ENCODE measurements at regions of chr16 and their contacts with region 1.

Region 1: DNA sequence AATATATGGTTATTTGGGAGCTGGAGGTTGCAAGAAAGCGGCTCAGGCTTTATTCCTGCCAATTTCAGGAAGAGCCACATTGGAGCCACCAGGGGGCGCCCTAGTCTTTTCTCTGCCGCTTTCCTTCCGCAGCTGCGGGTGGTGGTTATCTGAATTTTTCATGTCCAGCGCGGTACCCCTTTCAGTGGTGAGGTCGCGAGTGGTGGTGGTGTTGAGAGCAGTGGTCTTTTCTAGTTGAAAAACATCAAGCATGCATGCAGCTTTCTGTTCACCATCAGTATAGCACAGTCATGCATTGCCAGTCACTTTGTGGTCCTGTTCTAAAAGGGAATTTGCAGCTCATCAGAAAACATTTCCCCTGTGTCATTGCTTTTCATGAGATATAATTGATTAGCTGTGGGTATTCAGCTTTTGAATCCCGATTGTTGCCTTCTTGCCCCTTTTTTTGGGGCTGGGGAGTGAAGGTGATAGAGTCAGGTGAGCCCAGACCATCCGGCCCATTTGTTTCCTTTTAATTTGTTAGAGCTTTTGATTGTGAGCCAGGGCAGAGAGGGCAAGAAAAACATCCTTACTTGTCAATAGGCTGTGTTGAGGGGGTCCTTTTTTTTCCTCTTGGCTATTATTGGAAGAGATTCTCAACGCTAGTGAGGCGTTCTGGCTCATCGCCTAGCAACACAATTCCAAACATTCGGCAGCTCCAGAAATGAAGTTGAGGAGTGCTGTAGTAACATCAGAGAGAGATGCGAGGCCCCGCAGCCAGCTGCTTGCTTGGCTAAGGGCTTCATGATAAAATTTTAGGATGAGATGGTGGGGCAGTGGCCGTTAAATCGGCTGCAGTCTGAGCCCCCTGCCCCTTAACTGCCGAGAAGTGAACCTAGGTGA is 119.0 kb downstream of the SNX29 start:
- DNase-seq: peak; percentile 31 to 80
- ATAC-seq: peak; percentile 46

Region 2: DNA sequence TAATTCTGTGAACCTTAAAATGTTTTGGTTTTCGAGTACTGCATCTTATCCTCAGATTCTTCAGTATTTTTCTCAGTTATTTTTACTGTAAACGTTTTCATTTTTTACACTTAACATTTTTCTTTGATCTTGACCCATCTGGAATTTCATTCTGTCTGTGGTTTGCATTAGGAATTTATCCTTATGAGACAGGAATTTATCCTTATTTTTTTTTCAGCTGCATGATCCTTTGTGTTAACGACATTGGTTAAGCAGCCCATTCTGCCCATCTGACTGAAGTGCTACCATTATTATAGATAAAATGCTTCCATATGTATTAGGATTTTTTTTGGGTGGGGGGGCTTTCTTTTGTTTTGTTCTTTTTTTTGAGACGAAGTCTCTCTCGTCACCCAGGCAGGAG is 78.0 kb before region 1 on chr16:
- intact Hi-C with region 1: no loop called
- DNase-seq: no peak
- ATAC-seq: no peak

Region 3: GRCh38 chr16:12240036-12240435 is 144.5 kb after region 1 on chr16:
- intact Hi-C with region 1: no loop called
- DNase-seq: no peak
- ATAC-seq: no peak

Region 4: GRCh38 chr16:12819126-12820117 is 723.9 kb after region 1 on chr16:
- intact Hi-C with region 1: loop called in 1 of 2 experiments (anchors 10 kb)
- DNase-seq: peak; percentile 35 to 71
- ATAC-seq: peak; percentile 64

Measured in left colon (tissue), 2 donors.